B cell (primary cell): ENCODE measurements at regions of chr3 and their contacts with region 1.

Region 1: DNA sequence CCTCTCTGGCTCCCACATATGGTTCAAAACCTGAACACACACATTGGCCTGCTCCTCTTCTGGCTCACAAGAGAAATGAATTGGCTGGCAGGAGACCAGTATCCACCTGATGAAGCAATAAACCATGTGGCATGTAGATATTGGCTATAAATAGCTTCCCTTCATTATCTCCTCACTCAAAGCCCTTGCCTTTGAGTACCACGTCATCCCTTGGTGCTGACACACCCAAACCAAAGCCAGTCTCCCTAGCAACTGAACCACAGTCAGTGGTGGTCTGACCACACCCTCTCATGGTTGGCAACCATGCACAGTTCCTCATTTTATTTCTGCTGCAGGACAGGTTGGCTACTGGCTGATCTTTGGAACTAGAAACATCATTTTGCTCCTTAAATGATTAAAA is 98.8 kb downstream of the ZNF621 start:
- DNase-seq: peak; percentile 96
- ATAC-seq: peak; percentile 92
- H3K4me3 ChIP-seq: peak overlapping the region; percentile 68 to 89 (median 84)
- H3K4me3 Mint-ChIP-seq: no peak overlapping the region
- H3K27ac ChIP-seq: peak overlapping the region; percentile 96 to 98
- H3K27ac Mint-ChIP-seq: no peak overlapping the region
- H3K4me1 ChIP-seq: peaks cover 33 to 48% of the 10 kb centered on the region in 2 donors
- H3K4me1 Mint-ChIP-seq: peaks cover 14% of the 10 kb centered on the region
- H3K27me3 ChIP-seq: no peaks in the 10 kb centered on the region
- H3K27me3 Mint-ChIP-seq: no peaks in the 10 kb centered on the region
- CTCF ChIP-seq: no peak

Region 2: DNA sequence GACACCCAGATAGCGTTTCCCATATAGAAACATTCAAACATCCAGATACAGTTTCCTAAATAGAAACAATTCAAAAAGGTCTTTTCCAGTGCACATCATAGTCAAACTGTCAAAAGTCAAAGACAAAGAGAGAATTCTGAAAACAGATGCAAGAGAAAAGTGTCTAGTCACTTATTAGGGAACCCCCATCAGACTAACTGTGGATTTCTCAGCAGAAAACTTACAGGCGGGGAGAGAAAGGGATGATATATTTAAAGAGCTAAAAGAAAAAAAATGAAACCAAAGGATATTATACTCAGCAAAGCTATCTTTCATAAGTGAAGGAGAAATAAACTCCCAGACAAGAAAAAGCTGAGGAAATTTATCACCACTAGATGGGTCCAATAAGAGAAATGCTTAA is 1321.4 kb before region 1 on chr3:
- CTCF ChIA-PET with region 1: no interaction called
- POLR2A ChIA-PET with region 1: no interaction called
- intact Hi-C with region 1: no loop called
- DNase-seq: no peak
- ATAC-seq: no peak
- H3K4me3 ChIP-seq: no peak overlapping the region
- H3K4me3 Mint-ChIP-seq: no peak overlapping the region
- H3K27ac ChIP-seq: no peak overlapping the region
- H3K27ac Mint-ChIP-seq: no peak overlapping the region
- H3K4me1 ChIP-seq: no peaks in the 10 kb centered on the region
- H3K4me1 Mint-ChIP-seq: no peaks in the 10 kb centered on the region
- H3K27me3 ChIP-seq: peaks cover 0 to 12% (median 9%) of the 10 kb centered on the region in 4 experiments
- H3K27me3 Mint-ChIP-seq: peaks cover 55% of the 10 kb centered on the region
- CTCF ChIP-seq: no peak

Region 3: GRCh38 chr3:40073310-40074007 is 550.1 kb before region 1 on chr3:
- CTCF ChIA-PET with region 1: no interaction called
- POLR2A ChIA-PET with region 1: no interaction called
- intact Hi-C with region 1: no loop called
- DNase-seq: no peak
- ATAC-seq: no peak
- H3K4me3 ChIP-seq: no peak overlapping the region
- H3K4me3 Mint-ChIP-seq: no peak overlapping the region
- H3K27ac ChIP-seq: no peak overlapping the region
- H3K27ac Mint-ChIP-seq: no peak overlapping the region
- H3K4me1 ChIP-seq: no peaks in the 10 kb centered on the region
- H3K4me1 Mint-ChIP-seq: no peaks in the 10 kb centered on the region
- H3K27me3 ChIP-seq: no peaks in the 10 kb centered on the region
- H3K27me3 Mint-ChIP-seq: peaks cover 16% of the 10 kb centered on the region
- CTCF ChIP-seq: no peak

Region 4: DNA sequence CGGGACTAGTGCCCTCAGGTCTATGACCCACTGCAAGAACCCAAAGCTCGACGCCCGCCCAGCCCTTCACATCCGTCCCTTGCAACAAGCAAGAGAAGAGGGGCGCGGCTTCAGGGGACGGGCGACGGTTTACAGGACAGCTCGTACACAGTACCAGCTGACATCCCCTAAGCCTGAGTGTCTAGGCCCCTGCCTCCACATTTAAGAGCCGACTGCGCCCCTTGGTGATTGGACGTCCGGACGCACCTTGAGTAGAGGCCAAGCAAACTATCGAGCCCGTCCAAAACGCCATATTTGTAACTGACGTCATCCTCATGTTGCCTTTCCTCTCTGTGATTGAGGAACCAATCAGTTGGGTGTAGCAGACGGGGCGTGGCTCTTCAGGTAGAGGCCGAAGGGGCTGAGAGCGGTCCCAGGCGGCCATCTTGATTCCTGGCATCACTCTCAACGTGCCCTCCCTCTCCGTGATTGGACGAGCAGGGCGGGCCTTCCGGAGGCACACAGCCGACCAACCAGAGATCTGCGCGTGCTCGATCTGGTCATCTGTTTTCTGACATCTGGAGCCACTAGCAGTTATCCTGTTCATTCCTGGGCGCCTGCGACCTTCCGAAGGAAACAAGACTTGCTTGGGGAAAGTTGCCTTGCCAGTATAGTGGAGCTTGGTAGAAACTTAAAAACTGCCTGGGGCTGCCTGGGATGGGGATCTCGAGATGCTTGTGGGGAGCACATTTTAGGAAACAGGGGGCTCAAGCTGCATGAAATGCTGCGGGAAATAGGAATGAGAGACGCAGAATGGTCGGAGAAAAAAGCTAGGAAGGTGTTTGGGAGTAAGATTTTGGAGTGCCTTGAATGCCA is 170.5 kb before region 1 on chr3:
- CTCF ChIA-PET with region 1: no interaction called
- POLR2A ChIA-PET with region 1: no interaction called
- intact Hi-C with region 1: loop called (anchors 1 kb)
- DNase-seq: peak; percentile 97
- ATAC-seq: peak; percentile 90
- H3K4me3 ChIP-seq: peak overlapping the region; percentile 60 to 88 (median 77)
- H3K4me3 Mint-ChIP-seq: peak overlapping the region; percentile 96
- H3K27ac ChIP-seq: peak overlapping the region; percentile 92 to 95
- H3K27ac Mint-ChIP-seq: peak overlapping the region; percentile 99
- H3K4me1 ChIP-seq: peaks cover 24 to 28% of the 10 kb centered on the region in 2 donors
- H3K4me1 Mint-ChIP-seq: peaks cover 36% of the 10 kb centered on the region
- H3K27me3 ChIP-seq: no peaks in the 10 kb centered on the region
- H3K27me3 Mint-ChIP-seq: no peaks in the 10 kb centered on the region
- CTCF ChIP-seq: peak; percentile 6

Region 5: GRCh38 chr3:40645883-40646282 is 22.3 kb after region 1 on chr3:
- CTCF ChIA-PET with region 1: no interaction called
- POLR2A ChIA-PET with region 1: no interaction called
- intact Hi-C with region 1: loop called (anchors 2 kb)
- DNase-seq: no peak
- ATAC-seq: no peak
- H3K4me3 ChIP-seq: no peak overlapping the region
- H3K4me3 Mint-ChIP-seq: no peak overlapping the region
- H3K27ac ChIP-seq: no peak overlapping the region
- H3K27ac Mint-ChIP-seq: no peak overlapping the region
- H3K4me1 ChIP-seq: no peaks in the 10 kb centered on the region
- H3K4me1 Mint-ChIP-seq: peaks cover 5% of the 10 kb centered on the region
- H3K27me3 ChIP-seq: no peaks in the 10 kb centered on the region
- H3K27me3 Mint-ChIP-seq: no peaks in the 10 kb centered on the region
- CTCF ChIP-seq: no peak

Region 6: DNA sequence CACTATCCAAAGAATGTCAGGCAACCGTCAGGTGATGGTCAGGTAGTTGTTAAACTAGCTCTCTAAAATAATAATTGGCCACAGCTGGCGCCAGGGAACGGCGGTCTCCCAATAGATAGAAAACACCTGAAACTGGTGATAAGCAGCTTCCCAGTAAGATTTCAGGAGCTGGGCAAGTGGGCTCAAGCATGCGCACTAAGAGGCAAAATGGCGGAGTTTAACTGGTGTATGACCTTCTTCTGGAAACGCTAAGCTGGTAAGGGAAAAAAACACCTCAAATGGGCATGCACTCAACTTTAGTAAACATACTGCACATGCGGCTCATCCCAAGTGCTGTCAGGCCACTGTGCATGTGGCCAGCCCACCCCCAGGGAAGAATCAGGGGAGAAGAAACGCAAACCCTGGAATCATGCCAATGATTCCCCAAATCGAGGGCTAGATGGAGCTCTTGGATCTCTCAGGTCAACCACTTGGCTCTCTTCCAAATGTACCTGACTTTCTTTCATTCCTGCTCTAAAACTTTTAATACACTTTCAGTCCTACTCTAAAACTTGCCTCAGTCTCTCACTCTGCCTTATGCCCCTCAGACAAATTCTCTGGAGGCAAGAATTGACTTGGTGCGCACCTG is 96.2 kb after region 1 on chr3:
- CTCF ChIA-PET with region 1: interaction called, 4 read pairs
- POLR2A ChIA-PET with region 1: no interaction called
- intact Hi-C with region 1: loop called (anchors 1 kb)
- DNase-seq: no peak
- ATAC-seq: no peak
- H3K4me3 ChIP-seq: no peak overlapping the region
- H3K4me3 Mint-ChIP-seq: no peak overlapping the region
- H3K27ac ChIP-seq: no peak overlapping the region
- H3K27ac Mint-ChIP-seq: no peak overlapping the region
- H3K4me1 ChIP-seq: peaks cover 24% of the 10 kb centered on the region in 2 donors
- H3K4me1 Mint-ChIP-seq: peaks cover 37% of the 10 kb centered on the region
- H3K27me3 ChIP-seq: no peaks in the 10 kb centered on the region
- H3K27me3 Mint-ChIP-seq: no peaks in the 10 kb centered on the region
- CTCF ChIP-seq: no peak

Region 7: GRCh38 chr3:41961750-41962679 is 1338.4 kb after region 1 on chr3 and contains the start of gene ULK4:
- CTCF ChIA-PET with region 1: no interaction called
- POLR2A ChIA-PET with region 1: no interaction called
- intact Hi-C with region 1: loop called (anchors 2 kb)
- DNase-seq: peak; percentile 99
- ATAC-seq: peak; percentile 87
- H3K4me3 ChIP-seq: peak within 1 kb of the TSS; percentile 75 to 92 (median 88)
- H3K4me3 Mint-ChIP-seq: peak within 1 kb of the TSS; percentile 98
- H3K27ac ChIP-seq: peak within 1 kb of the TSS; percentile 90 to 99
- H3K27ac Mint-ChIP-seq: peak within 1 kb of the TSS; percentile 99
- H3K4me1 ChIP-seq: peaks cover 10 to 16% of the 10 kb centered on the region in 2 donors
- H3K4me1 Mint-ChIP-seq: peaks cover 19% of the 10 kb centered on the region
- H3K27me3 ChIP-seq: no peaks in the 10 kb centered on the region
- H3K27me3 Mint-ChIP-seq: no peaks in the 10 kb centered on the region
- CTCF ChIP-seq: no peak
- total RNA-seq, gene ULK4: 27.2 and 33.7 TPM in 2 replicates